ENCODE measurements at regions of chr1 and their contacts with region 1.

Region 1: GRCh38 chr1:116853670-116854402 is 55.9 kb upstream of the PTGFRN start:
- DNase-seq: no peak
- H3K4me3 Mint-ChIP-seq: peak overlapping the region; percentile 21
- H3K27ac Mint-ChIP-seq: peak overlapping the region; percentile 65
- H3K4me1 Mint-ChIP-seq: peaks cover 21% of the 10 kb centered on the region
- H3K27me3 Mint-ChIP-seq: no peaks in the 10 kb centered on the region

Region 2: DNA sequence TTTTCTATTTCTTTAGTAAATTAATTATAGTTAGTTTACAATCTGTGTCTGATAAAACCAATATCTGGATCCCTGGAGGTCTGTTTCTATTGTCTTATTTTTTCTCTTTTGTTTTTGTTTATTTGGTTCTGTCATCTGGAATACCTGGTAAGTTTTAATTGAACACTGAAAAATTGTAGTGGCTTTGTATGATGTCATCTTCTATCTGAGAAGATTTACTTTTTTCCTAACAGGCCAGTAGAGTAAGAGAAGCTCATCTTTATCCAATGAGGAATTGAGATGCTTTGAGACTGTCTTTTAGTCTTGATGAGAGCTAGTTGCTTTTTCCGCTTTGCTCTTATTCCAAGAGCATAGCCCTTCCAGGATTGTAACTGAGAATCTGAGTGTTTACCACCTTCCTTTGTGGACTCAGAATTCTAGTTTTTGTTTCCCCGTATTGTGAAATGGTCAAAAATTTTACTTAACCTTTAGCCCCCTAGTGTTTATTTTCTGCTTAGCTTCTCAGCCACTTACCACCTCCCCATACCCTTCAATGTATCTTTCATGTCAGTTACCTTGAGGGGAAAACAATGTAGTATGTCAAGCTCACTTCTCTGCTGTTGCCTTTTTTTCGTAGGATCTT is 80.9 kb after region 1 on chr1:
- intact Hi-C with region 1: loop called (anchors 5 kb)
- DNase-seq: no peak
- H3K4me3 Mint-ChIP-seq: peak overlapping the region; percentile 36
- H3K27ac Mint-ChIP-seq: peak overlapping the region; percentile 74
- H3K4me1 Mint-ChIP-seq: peaks cover 28% of the 10 kb centered on the region
- H3K27me3 Mint-ChIP-seq: no peaks in the 10 kb centered on the region

Measured in activated CD4-positive, alpha-beta T cell treated with anti-CD3 and anti-CD28 coated beads, Interleukin-2, amount 10 ng/mL, durations not matched to agents 24 days and 14 days (primary cell).